ENCODE measurements at regions of chr10 and their contacts with region 1.

Region 1: DNA sequence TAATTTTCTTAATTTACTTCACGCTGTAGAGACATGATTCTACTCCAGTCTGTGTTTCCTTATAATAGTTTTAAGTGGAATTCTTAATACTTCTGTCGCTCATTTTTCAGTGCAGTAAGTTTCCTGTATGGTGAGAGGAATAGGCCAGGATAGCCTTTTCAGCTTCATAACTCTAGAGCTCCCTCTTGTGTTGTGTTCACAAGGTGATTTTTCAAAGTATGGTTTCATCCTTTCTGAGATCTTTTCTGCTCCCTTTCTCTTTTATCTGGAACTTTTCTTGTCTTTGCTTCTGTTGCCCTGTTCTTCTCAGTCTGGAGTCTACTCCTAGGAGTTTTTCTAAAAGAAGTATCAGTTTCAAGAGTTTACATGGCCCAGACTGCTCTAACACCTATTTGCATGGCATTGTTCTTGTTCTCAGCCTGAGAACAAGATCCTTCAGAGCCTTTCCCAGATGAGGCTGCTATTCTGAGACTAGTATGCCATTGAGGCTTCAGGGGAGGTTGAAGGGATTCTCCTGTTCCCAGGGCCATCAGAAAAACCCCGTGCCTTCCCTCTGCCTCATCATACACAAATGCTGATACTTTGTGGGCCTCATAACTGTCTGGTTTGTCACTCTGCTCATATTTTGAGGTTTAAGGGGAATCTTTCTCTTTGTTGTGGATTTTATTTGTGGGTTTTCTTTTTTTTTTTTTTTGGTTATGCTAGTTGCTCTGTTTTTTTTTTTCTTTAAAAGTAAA is 21.8 kb downstream of the NET1 start:
- DNase-seq: no peak
- H3K4me3 ChIP-seq: no peak overlapping the region
- H3K27ac ChIP-seq: no peak overlapping the region
- H3K4me1 ChIP-seq: no peaks in the 10 kb centered on the region
- H3K27me3 ChIP-seq: no peaks in the 10 kb centered on the region
- CTCF ChIP-seq: peak in 3 of 4 experiments; percentile 35 to 67 (median 56)
- POLR2A ChIP-seq: no peak

Region 2: GRCh38 chr10:4825851-4826665 is 608.1 kb before region 1 on chr10 and contains the start of gene AKR1E2:
- intact Hi-C with region 1: loop called (anchors 10 kb)
- DNase-seq: peak; percentile 64
- H3K4me3 ChIP-seq: peak within 1 kb of the TSS; percentile 38 to 43
- H3K27ac ChIP-seq: peak within 1 kb of the TSS; percentile 73 to 74
- H3K4me1 ChIP-seq: no peaks in the 10 kb centered on the region
- H3K27me3 ChIP-seq: peaks cover 2% of the 10 kb centered on the region
- CTCF ChIP-seq: no peak
- POLR2A ChIP-seq: peak; percentile 3
- total RNA-seq, gene AKR1E2: 1.8 to 16.2 TPM

Measured in prostate gland (tissue), 2 donors.